Tibial artery (tissue), 4 donors: ENCODE measurements at regions of chr17 and their contacts with region 1.

Region 1: DNA sequence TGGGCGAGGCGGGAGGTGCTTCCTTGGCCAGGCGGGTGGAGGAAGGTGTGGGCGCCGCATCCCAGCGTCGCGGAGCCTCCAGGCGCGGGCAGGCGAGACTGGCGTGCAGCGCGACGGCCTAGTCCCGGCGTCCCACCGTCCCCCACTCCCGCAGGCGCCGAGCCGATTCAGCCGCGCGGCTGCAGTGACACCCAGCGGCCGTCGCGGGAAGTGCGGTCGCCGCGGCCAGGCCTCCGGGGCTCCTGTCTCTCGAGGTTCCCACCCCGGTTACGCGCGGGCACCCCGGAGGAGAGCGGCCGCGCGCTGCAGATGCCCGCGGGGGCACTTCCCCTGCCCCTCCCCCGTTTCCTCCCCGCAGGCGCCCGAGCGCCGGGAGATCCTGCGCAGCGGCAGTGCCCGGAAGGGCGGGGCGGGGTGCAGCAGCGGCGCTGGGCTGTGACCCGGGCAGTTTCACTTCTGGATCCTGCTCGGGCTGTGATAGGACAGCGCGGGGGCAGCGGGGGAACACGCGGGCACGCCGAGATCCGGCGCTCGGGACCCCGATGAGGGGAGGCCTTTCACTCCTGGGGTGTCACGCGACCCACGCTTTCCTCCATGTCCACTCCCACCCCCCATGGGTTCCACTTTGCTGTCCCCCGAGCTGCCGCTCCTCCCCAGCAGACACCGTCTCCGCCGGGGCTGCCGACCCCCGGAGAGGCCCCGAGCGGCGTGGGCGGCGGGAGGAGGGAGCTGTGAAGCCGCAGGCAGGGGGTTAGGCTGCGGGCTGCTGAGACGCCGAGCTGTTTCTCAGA is 16.6 kb downstream of the GRB7 start:
- DNase-seq: peak; percentile 88 to 94
- H3K4me3 ChIP-seq: peak overlapping the region; percentile 72 to 78
- H3K27ac ChIP-seq: peak overlapping the region; percentile 76 to 90
- H3K4me1 ChIP-seq: peaks cover 0 to 22% (median 13%) of the 10 kb centered on the region in 4 donors
- H3K27me3 ChIP-seq: peaks cover 0 to 15% of the 10 kb centered on the region in 2 donors
- CTCF ChIP-seq: peak; percentile 98 to 99

Region 2: GRCh38 chr17:39621523-39622379 is 132.6 kb before region 1 on chr17:
- intact Hi-C with region 1: loop called (anchors 1 kb)
- DNase-seq: peak; percentile 85 to 91
- H3K4me3 ChIP-seq: no peak overlapping the region
- H3K27ac ChIP-seq: no peak overlapping the region
- H3K4me1 ChIP-seq: peaks cover 0 to 45% (median 16%) of the 10 kb centered on the region in 4 donors
- H3K27me3 ChIP-seq: peaks cover 2 to 46% of the 10 kb centered on the region in 2 donors
- CTCF ChIP-seq: peak; percentile 99 to 100

Region 3: GRCh38 chr17:39730095-39730921 is 24.0 kb before region 1 on chr17 and contains the start of gene MIEN1:
- intact Hi-C with region 1: loop called (anchors 2 kb)
- DNase-seq: peak; percentile 85 to 94
- H3K4me3 ChIP-seq: peak within 1 kb of the TSS; percentile 73 to 82
- H3K27ac ChIP-seq: peak within 1 kb of the TSS; percentile 85 to 91
- H3K4me1 ChIP-seq: peaks cover 0 to 15% (median 10%) of the 10 kb centered on the region in 4 donors
- H3K27me3 ChIP-seq: no peaks in the 10 kb centered on the region
- CTCF ChIP-seq: peak; percentile 90 to 96

Region 4: DNA sequence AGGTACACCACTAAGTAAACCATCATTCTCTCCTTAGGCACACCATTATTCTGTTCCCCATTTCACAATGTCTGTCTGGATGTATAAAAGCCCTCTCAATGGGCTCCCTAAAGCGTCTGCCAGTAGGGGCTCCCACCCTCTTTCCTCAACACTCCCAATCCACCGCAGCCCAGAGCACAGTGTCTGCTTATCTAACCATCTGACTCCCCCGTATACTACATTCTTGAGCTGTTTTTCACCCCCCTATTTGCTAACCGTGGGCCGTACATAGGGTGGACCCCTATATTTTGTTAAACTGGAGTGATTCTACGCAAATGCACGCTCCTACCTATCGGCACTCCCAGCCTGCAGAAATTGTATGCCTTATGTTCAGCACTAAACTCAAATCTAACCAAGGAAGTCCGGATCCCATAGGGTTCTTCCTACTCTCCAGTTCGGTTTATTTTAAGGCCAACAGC is 225.6 kb after region 1 on chr17:
- intact Hi-C with region 1: loop called (anchors 10 kb)
- DNase-seq: no peak
- H3K4me3 ChIP-seq: peak overlapping the region; percentile 82 to 97
- H3K27ac ChIP-seq: peak overlapping the region; percentile 89 to 90
- H3K4me1 ChIP-seq: peaks cover 0 to 30% (median 25%) of the 10 kb centered on the region in 4 donors
- H3K27me3 ChIP-seq: peaks cover 0 to 26% of the 10 kb centered on the region in 2 donors
- CTCF ChIP-seq: no peak